ENCODE measurements at regions of chr6 and their contacts with region 1.

Region 1: GRCh38 chr6:107179004-107179403 is 63.7 kb upstream of the BEND3 start:
- DNase-seq: no peak
- H3K4me3 ChIP-seq: no peak overlapping the region
- CTCF ChIP-seq: no peak
- POLR2A ChIP-seq: no peak

Region 2: DNA sequence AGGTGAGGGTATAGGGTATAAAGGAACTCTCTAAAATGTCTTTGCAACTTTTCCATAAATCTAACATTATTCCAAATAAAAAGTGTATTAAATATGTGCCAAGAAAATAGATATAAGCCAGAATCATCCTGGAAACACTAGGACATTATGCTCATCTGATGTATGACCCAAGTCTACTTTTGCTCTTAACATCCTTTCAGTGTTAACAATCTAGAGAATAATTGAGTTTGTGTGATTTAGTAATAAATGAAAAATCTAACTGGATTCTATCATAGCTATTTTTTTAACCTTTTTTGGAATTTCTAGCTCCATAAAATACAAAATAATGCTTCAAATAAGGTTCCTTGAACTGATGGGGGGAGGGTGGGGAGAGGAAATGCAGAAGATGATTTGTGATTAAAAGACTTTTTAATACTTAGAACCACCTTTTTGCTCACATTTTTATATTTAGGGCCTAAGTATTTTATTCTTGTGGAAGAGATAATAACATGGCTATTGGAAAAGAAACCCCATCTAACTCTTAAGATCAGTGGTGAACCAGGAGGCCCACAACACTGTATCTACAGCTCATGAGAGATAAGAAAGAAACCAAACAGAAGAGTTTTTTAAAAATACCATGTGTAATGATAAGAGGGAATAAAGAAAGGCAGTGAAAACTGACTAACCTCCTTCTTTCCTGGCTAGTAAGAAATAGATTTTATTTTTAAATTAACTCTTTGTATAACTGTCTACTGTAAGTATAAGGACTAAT is 211.9 kb after region 1 on chr6:
- intact Hi-C with region 1: loop called (anchors 5 kb)
- DNase-seq: no peak
- H3K4me3 ChIP-seq: no peak overlapping the region
- CTCF ChIP-seq: no peak
- POLR2A ChIP-seq: no peak